Activated naive CD4-positive, alpha-beta T cell treated with anti-CD3 and anti-CD28 coated beads, Interleukin-2, amount 10 ng/mL, durations not matched to agents 7 days and 5 days (primary cell): ENCODE measurements at regions of chr3 and their contacts with region 1.

Region 1: DNA sequence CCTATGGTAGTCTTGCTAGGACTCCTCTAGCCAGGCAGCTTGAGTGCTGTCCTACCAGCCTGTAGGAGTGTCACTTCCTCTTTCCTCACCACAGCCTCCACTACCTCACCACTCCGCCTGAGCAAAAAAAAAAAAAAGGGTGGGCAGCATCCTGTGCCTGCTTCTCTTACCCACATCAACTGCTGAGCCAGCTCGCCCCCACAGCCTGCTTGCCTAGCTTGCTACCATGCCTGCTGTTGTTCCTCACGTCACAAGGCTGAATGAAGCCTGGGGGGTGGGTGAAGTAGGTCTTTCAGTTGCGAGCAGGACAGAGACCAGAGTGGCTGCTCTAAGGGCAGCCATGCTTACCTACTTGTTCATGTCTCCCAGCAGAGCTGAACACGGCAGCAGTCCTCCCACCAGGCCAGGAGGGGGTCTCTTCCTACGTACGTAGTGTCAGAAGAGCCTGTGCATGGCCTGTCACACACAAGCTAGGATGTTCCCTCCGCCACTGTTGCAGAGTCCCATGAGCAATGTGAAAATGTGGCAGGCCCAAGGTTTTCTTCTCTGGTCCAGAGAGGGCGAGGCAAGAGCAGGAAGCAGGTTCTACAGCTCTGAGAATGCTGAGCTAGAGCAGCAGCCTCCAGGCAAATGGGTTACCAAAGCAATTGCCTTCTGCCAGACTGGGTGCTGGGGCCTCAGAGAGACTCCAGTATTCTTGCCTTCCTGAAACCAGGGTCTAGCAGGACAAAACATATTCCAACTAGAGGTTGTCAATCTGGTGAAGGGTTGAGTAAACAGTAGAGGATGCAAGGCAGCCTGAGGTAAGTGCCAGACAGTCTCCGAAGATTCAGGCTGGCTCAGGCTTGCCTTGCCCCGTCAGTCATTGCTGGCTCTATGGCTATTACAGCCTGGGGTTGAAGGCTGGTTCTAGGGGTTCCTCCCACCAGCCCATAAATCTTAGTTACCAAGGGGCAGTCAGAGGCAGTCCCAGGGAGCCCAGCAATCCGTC is 8.1 kb downstream of the PPM1M start:
- DNase-seq: peak; percentile 91
- H3K4me3 Mint-ChIP-seq: peak overlapping the region; percentile 73
- H3K27ac Mint-ChIP-seq: peak overlapping the region; percentile 99
- H3K4me1 Mint-ChIP-seq: peaks cover 96% of the 10 kb centered on the region
- H3K27me3 Mint-ChIP-seq: no peaks in the 10 kb centered on the region

Region 2: GRCh38 chr3:52238761-52239701 is 14.6 kb before region 1 on chr3 and contains the start of gene TWF2:
- CTCF ChIA-PET with region 1: interaction called, 26 read pairs
- DNase-seq: peak; percentile 88
- H3K4me3 Mint-ChIP-seq: peak within 1 kb of the TSS; percentile 96
- H3K27ac Mint-ChIP-seq: peak within 1 kb of the TSS; percentile 96
- H3K4me1 Mint-ChIP-seq: peaks cover 80% of the 10 kb centered on the region
- H3K27me3 Mint-ChIP-seq: no peaks in the 10 kb centered on the region

Region 3: GRCh38 chr3:52270252-52270754 is 16.7 kb after region 1 on chr3:
- CTCF ChIA-PET with region 1: interaction called, 15 read pairs
- DNase-seq: no peak
- H3K4me3 Mint-ChIP-seq: peak overlapping the region; percentile 70
- H3K27ac Mint-ChIP-seq: peak overlapping the region; percentile 98
- H3K4me1 Mint-ChIP-seq: peaks cover 92% of the 10 kb centered on the region
- H3K27me3 Mint-ChIP-seq: no peaks in the 10 kb centered on the region

Region 4: DNA sequence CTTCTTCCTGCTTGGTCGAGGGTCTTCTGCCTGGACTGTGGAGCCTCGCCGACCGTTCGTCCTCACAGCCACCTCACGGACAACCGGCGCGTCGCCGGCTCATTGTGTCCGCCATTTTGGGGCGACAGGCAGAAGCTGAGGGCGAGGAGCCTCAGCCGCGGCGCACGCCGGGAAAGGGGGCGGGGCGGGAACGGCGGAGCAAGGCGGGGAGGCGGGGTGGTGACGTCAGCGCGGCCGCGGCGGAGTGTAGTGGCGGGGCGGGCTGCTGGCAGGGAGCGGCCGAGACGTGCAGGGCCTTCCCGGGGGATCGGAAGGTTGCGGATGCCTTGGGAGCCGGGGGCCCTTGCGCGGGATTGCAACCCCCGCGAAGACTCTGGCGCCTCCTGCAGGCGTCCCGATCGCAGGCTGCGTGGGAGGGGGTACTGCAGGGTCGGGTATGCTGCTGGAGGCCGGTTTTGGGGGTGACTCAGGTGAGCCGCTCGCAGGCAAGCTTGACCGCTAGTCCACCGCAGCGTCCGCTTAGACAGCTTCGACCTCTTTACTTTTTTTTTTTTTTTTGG is 25.0 kb after region 1 on chr3 and contains the start of gene WDR82:
- CTCF ChIA-PET with region 1: interaction called, 23 read pairs
- DNase-seq: peak; percentile 98
- H3K4me3 Mint-ChIP-seq: peak within 1 kb of the TSS; percentile 95
- H3K27ac Mint-ChIP-seq: peak within 1 kb of the TSS; percentile 98
- H3K4me1 Mint-ChIP-seq: peaks cover 57% of the 10 kb centered on the region
- H3K27me3 Mint-ChIP-seq: no peaks in the 10 kb centered on the region